A673 (cell line): ENCODE measurements at regions of chr3 and their contacts with region 1.

Region 1: GRCh38 chr3:136075218-136075808 is 109.8 kb downstream of the PPP2R3A start:
- DNase-seq: peak; percentile 83
- H3K4me3 ChIP-seq: no peak overlapping the region
- H3K27ac ChIP-seq: no peak overlapping the region
- H3K4me1 ChIP-seq: peaks cover 11% of the 10 kb centered on the region
- H3K27me3 ChIP-seq: no peaks in the 10 kb centered on the region
- CTCF ChIP-seq: peak; percentile 95

Region 2: DNA sequence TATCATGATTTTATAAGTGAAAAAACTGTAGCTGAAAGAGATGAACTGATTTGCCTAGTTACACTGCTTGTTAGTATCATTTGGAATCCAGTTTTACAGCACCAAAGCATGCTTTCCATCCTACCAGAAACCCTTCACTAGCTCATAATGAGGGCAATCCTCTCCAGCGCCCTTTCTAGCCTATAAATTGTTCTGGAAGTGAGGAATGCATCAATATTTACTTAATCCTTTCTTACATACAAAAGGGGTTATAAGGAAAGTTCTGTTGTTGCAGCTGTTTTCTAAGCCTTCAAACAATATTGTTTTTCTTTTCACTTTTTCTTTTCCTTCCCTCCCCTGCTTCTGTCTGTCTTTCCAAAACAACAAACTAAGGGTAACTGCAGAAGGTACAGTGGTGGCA is 163.8 kb after region 1 on chr3:
- CTCF ChIA-PET with region 1: interaction called, 3 read pairs
- POLR2A ChIA-PET with region 1: no interaction called
- intact Hi-C with region 1: loop called (anchors 5 kb)
- DNase-seq: no peak
- H3K4me3 ChIP-seq: no peak overlapping the region
- H3K27ac ChIP-seq: no peak overlapping the region
- H3K4me1 ChIP-seq: no peaks in the 10 kb centered on the region
- H3K27me3 ChIP-seq: no peaks in the 10 kb centered on the region
- CTCF ChIP-seq: no peak

Region 3: DNA sequence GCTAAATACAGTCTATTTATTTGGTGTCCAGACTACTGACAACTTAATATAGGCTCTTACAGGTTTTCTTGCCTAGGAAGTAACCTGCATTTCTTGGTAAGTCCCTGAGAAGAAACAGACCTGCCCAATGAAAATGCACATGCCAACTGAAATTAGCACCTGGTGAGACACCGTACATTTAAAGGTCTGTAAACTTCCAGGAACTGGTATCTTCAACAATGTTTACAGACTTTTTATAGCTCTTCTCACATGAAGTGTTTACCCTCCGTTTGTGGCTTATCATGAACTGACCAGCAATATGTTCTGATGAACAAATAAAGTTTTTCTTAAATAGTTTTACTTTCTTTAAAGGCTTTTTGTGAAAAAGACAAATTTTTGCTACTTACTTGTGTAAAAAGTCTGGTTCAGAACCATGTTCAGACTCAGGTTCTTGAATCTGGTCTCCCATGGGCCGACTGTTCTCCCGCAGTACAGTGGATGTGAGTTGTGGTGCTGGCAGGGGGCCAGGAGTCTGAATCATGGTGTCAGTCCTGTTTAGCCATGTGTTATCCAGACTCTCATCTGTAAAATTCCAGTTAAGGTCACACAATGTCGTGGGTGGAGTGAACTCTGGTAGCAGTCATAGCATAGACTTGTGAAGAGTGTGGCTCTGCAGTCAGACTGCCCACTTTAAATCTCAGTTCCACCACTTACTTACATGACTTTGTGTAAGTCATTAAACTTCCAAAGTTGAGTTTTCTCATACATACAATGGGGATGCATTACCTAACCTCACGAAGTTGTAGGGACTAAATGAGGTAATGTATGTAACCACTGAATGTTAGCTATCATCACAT is 268.4 kb after region 1 on chr3:
- CTCF ChIA-PET with region 1: no interaction called
- POLR2A ChIA-PET with region 1: no interaction called
- intact Hi-C with region 1: loop called (anchors 10 kb)
- DNase-seq: peak; percentile 50
- H3K4me3 ChIP-seq: no peak overlapping the region
- H3K27ac ChIP-seq: no peak overlapping the region
- H3K4me1 ChIP-seq: peaks cover 6% of the 10 kb centered on the region
- H3K27me3 ChIP-seq: no peaks in the 10 kb centered on the region
- CTCF ChIP-seq: no peak

Region 4: GRCh38 chr3:136545664-136546268 is 470.5 kb after region 1 on chr3:
- CTCF ChIA-PET with region 1: no interaction called
- POLR2A ChIA-PET with region 1: no interaction called
- intact Hi-C with region 1: loop called (anchors 5 kb)
- DNase-seq: peak; percentile 41
- H3K4me3 ChIP-seq: no peak overlapping the region
- H3K27ac ChIP-seq: peak overlapping the region; percentile 27
- H3K4me1 ChIP-seq: peaks cover 51% of the 10 kb centered on the region
- H3K27me3 ChIP-seq: no peaks in the 10 kb centered on the region
- CTCF ChIP-seq: peak; percentile 53

Region 5: GRCh38 chr3:136720095-136720494 is 644.8 kb after region 1 on chr3:
- CTCF ChIA-PET with region 1: no interaction called
- POLR2A ChIA-PET with region 1: no interaction called
- intact Hi-C with region 1: no loop called
- DNase-seq: no peak
- H3K4me3 ChIP-seq: no peak overlapping the region
- H3K27ac ChIP-seq: no peak overlapping the region
- H3K4me1 ChIP-seq: no peaks in the 10 kb centered on the region
- H3K27me3 ChIP-seq: no peaks in the 10 kb centered on the region
- CTCF ChIP-seq: no peak

Region 6: GRCh38 chr3:137032465-137033120 is 957.3 kb after region 1 on chr3:
- CTCF ChIA-PET with region 1: interaction called, 4 read pairs
- POLR2A ChIA-PET with region 1: no interaction called
- intact Hi-C with region 1: loop called (anchors 5 kb)
- DNase-seq: peak; percentile 89
- H3K4me3 ChIP-seq: peak overlapping the region; percentile 42
- H3K27ac ChIP-seq: no peak overlapping the region
- H3K4me1 ChIP-seq: peaks cover 3% of the 10 kb centered on the region
- H3K27me3 ChIP-seq: no peaks in the 10 kb centered on the region
- CTCF ChIP-seq: peak; percentile 94